Naive thymus-derived CD4-positive, alpha-beta T cell (primary cell): ENCODE measurements at regions of chr15 and their contacts with region 1.

Region 1: GRCh38 chr15:67456677-67457529 is 64.0 kb upstream of the C15orf61 start:
- DNase-seq: peak; percentile 49 to 83 (median 70)
- ATAC-seq: peak; percentile 94
- H3K4me3 ChIP-seq: no peak overlapping the region
- H3K4me3 Mint-ChIP-seq: no peak overlapping the region
- H3K27ac ChIP-seq: no peak overlapping the region
- H3K27ac Mint-ChIP-seq: no peak overlapping the region
- H3K4me1 ChIP-seq: no peaks in the 10 kb centered on the region
- H3K4me1 Mint-ChIP-seq: peaks cover 0 to 3% (median 0%) of the 10 kb centered on the region in 7 donors
- H3K27me3 ChIP-seq: no peaks in the 10 kb centered on the region
- H3K27me3 Mint-ChIP-seq: peaks cover 0 to 26% (median 4%) of the 10 kb centered on the region in 5 donors

Region 2: GRCh38 chr15:67048281-67049279 is 408.3 kb before region 1 on chr15:
- CTCF ChIA-PET with region 1: no interaction called
- POLR2A ChIA-PET with region 1: no interaction called
- intact Hi-C with region 1: no loop called
- DNase-seq: no peak
- ATAC-seq: peak; percentile 60
- H3K4me3 ChIP-seq: no peak overlapping the region
- H3K4me3 Mint-ChIP-seq: no peak overlapping the region
- H3K27ac ChIP-seq: no peak overlapping the region
- H3K27ac Mint-ChIP-seq: no peak overlapping the region
- H3K4me1 ChIP-seq: no peaks in the 10 kb centered on the region
- H3K4me1 Mint-ChIP-seq: peaks cover 10 to 28% (median 11%) of the 10 kb centered on the region in 7 donors
- H3K27me3 ChIP-seq: no peaks in the 10 kb centered on the region
- H3K27me3 Mint-ChIP-seq: no peaks in the 10 kb centered on the region

Region 3: GRCh38 chr15:67521029-67521811 is 64.3 kb after region 1 on chr15 and contains the start of gene C15orf61:
- CTCF ChIA-PET with region 1: no interaction called
- POLR2A ChIA-PET with region 1: interaction called, 3 read pairs
- intact Hi-C with region 1: loop called (anchors 5 to 10 kb)
- DNase-seq: peak; percentile 78 to 92 (median 82)
- ATAC-seq: peak; percentile 90
- H3K4me3 ChIP-seq: peak within 1 kb of the TSS; percentile 87
- H3K4me3 Mint-ChIP-seq: peak within 1 kb of the TSS; percentile 85 to 98 (median 95)
- H3K27ac ChIP-seq: peak within 1 kb of the TSS; percentile 85
- H3K27ac Mint-ChIP-seq: peak within 1 kb of the TSS; percentile 88 to 96 (median 94)
- H3K4me1 ChIP-seq: peaks cover 16 to 28% of the 10 kb centered on the region in 2 donors
- H3K4me1 Mint-ChIP-seq: peaks cover 20 to 40% (median 34%) of the 10 kb centered on the region in 7 donors
- H3K27me3 ChIP-seq: no peaks in the 10 kb centered on the region
- H3K27me3 Mint-ChIP-seq: no peaks in the 10 kb centered on the region
- total RNA-seq, gene C15orf61: 4.3 to 11.0 (median 8.2) TPM

Region 4: GRCh38 chr15:67542420-67543347 is 85.8 kb after region 1 on chr15 and contains the start of gene MAP2K5:
- CTCF ChIA-PET with region 1: no interaction called
- POLR2A ChIA-PET with region 1: no interaction called
- intact Hi-C with region 1: loop called in 1 of 2 experiments (anchors 5 kb)
- DNase-seq: peak; percentile 75 to 87 (median 78)
- ATAC-seq: peak; percentile 89
- H3K4me3 ChIP-seq: peak within 1 kb of the TSS; percentile 90
- H3K4me3 Mint-ChIP-seq: peak within 1 kb of the TSS; percentile 92 to 98 (median 98)
- H3K27ac ChIP-seq: peak within 1 kb of the TSS; percentile 78
- H3K27ac Mint-ChIP-seq: peak within 1 kb of the TSS; percentile 97 to 100 (median 99)
- H3K4me1 ChIP-seq: peaks cover 7 to 22% of the 10 kb centered on the region in 2 donors
- H3K4me1 Mint-ChIP-seq: peaks cover 20 to 68% (median 56%) of the 10 kb centered on the region in 7 donors
- H3K27me3 ChIP-seq: no peaks in the 10 kb centered on the region
- H3K27me3 Mint-ChIP-seq: no peaks in the 10 kb centered on the region
- total RNA-seq, gene MAP2K5: 23.4 to 43.4 (median 35.7) TPM

Region 5: DNA sequence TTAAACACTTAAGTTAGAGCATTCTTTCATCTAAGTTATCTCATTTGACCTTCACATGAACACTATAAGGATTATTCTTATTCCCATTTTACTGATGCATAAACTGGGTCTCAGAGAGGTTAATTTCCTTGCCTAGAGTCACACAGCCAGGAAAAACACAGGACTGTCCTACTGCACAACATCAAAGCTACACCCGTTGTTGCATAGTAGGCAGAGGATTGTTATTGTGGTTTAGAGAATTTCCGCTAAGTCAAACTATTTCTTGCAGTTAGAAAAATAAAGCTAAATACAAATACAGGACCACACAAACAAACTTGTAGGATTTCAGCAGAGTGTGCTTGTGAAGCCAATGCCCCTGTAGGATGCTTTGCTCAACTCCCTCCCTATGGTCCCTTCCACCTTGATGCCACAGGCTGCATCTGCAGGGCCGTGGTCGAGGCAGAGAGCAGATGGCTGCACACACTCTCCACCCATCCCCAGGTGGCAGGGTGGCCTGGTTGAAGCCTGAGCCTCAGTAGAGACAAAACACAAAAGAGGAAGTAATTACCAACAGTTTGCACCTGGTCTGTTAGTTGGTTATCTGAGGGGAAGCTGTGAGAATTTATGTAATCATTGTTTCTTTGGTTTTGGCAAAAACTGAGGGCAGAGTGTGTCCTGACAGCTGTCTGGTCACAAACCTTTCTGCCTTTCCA is 327.3 kb after region 1 on chr15:
- CTCF ChIA-PET with region 1: no interaction called
- POLR2A ChIA-PET with region 1: no interaction called
- intact Hi-C with region 1: loop called in 1 of 2 experiments (anchors 1 kb)
- DNase-seq: peak in 3 of 9 donors; percentile 3 to 9 (median 8)
- ATAC-seq: peak; percentile 57
- H3K4me3 ChIP-seq: no peak overlapping the region
- H3K4me3 Mint-ChIP-seq: peak overlapping the region; percentile 9 to 70 (median 32)
- H3K27ac ChIP-seq: no peak overlapping the region
- H3K27ac Mint-ChIP-seq: peak overlapping the region; percentile 7 to 86 (median 51)
- H3K4me1 ChIP-seq: peaks cover 5 to 20% of the 10 kb centered on the region in 2 donors
- H3K4me1 Mint-ChIP-seq: peaks cover 15 to 39% (median 35%) of the 10 kb centered on the region in 7 donors
- H3K27me3 ChIP-seq: no peaks in the 10 kb centered on the region
- H3K27me3 Mint-ChIP-seq: no peaks in the 10 kb centered on the region

Region 6: GRCh38 chr15:68229386-68230156 is 772.7 kb after region 1 on chr15 and contains the start of gene CLN6:
- CTCF ChIA-PET with region 1: no interaction called
- POLR2A ChIA-PET with region 1: no interaction called
- intact Hi-C with region 1: loop called in 1 of 2 experiments (anchors 1 kb)
- DNase-seq: peak; percentile 68 to 88 (median 81)
- ATAC-seq: peak; percentile 94
- H3K4me3 ChIP-seq: peak within 1 kb of the TSS; percentile 93
- H3K4me3 Mint-ChIP-seq: peak within 1 kb of the TSS; percentile 86 to 98 (median 92)
- H3K27ac ChIP-seq: peak within 1 kb of the TSS; percentile 79
- H3K27ac Mint-ChIP-seq: peak within 1 kb of the TSS; percentile 69 to 97 (median 88)
- H3K4me1 ChIP-seq: peaks cover 0 to 17% of the 10 kb centered on the region in 2 donors
- H3K4me1 Mint-ChIP-seq: peaks cover 30 to 44% (median 38%) of the 10 kb centered on the region in 7 donors
- H3K27me3 ChIP-seq: no peaks in the 10 kb centered on the region
- H3K27me3 Mint-ChIP-seq: peaks cover 0 to 3% (median 0%) of the 10 kb centered on the region in 5 donors
- total RNA-seq, gene CLN6: 15.0 to 66.6 (median 19.0) TPM

Region 7: DNA sequence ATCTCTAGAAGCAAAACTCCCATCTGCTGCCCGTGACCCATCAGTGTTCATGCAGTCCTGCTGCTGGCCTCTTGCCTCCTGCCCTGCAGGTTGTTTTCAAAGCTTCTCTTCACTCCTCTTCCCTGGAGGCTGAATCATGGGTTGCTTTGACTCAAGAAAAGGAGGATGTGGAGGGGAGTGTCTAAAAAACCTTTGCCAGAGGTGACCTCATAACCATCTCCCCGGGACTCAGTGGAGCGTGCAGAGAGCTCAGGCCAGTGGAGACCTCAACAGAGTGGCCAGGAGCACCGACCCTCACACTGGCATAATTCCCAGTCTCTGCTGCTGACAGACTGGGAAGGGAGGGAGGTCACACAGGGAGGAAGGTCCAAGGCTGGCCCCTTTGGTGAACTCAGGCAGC is 1036.0 kb after region 1 on chr15:
- CTCF ChIA-PET with region 1: no interaction called
- POLR2A ChIA-PET with region 1: no interaction called
- intact Hi-C with region 1: no loop called
- DNase-seq: no peak
- ATAC-seq: no peak
- H3K4me3 ChIP-seq: no peak overlapping the region
- H3K4me3 Mint-ChIP-seq: no peak overlapping the region
- H3K27ac ChIP-seq: no peak overlapping the region
- H3K27ac Mint-ChIP-seq: no peak overlapping the region
- H3K4me1 ChIP-seq: no peaks in the 10 kb centered on the region
- H3K4me1 Mint-ChIP-seq: no peaks in the 10 kb centered on the region
- H3K27me3 ChIP-seq: no peaks in the 10 kb centered on the region
- H3K27me3 Mint-ChIP-seq: peaks cover 25 to 51% (median 44%) of the 10 kb centered on the region in 5 donors